ENCODE measurements at regions of chr12 and their contacts with region 1.

Region 1: DNA sequence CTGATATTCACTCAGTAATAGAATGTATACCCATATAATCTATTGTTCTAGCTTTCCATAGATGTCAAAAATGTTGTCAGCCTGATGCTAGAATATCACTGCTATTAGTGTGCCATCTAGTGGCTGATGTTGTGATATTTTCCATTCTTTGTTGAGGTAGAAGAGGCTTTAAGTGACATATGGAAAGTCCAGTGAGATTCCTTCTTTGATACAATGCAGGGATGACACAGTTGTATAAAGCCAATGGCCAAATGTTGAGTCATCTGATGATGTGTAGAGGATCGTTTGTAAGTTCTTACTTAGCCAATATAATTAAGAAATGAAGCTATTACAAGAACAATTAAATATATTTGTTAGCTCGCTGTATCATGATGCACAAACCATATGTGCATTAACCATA is 58.1 kb upstream of the PCED1B start:
- DNase-seq: peak; percentile 46
- ATAC-seq: peak; percentile 54; the same call in 2 of the 3 replicates
- H3K4me3 ChIP-seq: no peak overlapping the region
- H3K27ac ChIP-seq: no peak overlapping the region
- H3K4me1 ChIP-seq: no peaks in the 10 kb centered on the region
- H3K27me3 ChIP-seq: peaks cover 1 to 7% of the 10 kb centered on the region in 2 experiments; a peak in 3 of 5 replicates
- CTCF ChIP-seq: peak; percentile 81
- EP300 ChIP-seq: no peak
- POLR2A ChIP-seq: no peak
- RAD21 ChIP-seq: peak; percentile 47; the same call in 1 of the 2 replicates

Region 2: GRCh38 chr12:45622210-45622937 is 1398.9 kb before region 1 on chr12:
- CTCF ChIA-PET with region 1: no interaction called
- POLR2A ChIA-PET with region 1: no interaction called
- in situ Hi-C with region 1: no loop called
- intact Hi-C with region 1: no loop called
- DNase-seq: no peak
- ATAC-seq: no peak; the same call in 1 of the 3 replicates
- H3K4me3 ChIP-seq: no peak overlapping the region
- H3K27ac ChIP-seq: no peak overlapping the region
- H3K4me1 ChIP-seq: no peaks in the 10 kb centered on the region
- H3K27me3 ChIP-seq: no peaks in the 10 kb centered on the region
- CTCF ChIP-seq: no peak
- EP300 ChIP-seq: no peak
- POLR2A ChIP-seq: no peak
- RAD21 ChIP-seq: no peak

Region 3: GRCh38 chr12:46124848-46125619 is 896.3 kb before region 1 on chr12:
- CTCF ChIA-PET with region 1: no interaction called
- POLR2A ChIA-PET with region 1: no interaction called
- in situ Hi-C with region 1: no loop called
- intact Hi-C with region 1: loop called (anchors 1 kb)
- DNase-seq: peak; percentile 59
- ATAC-seq: peak; percentile 82
- H3K4me3 ChIP-seq: no peak overlapping the region; a peak in 1 of 6 replicates
- H3K27ac ChIP-seq: no peak overlapping the region
- H3K4me1 ChIP-seq: peaks cover 15% of the 10 kb centered on the region
- H3K27me3 ChIP-seq: peaks cover 0 to 10% of the 10 kb centered on the region in 2 experiments; a peak in 1 of 5 replicates
- CTCF ChIP-seq: peak; percentile 70
- EP300 ChIP-seq: no peak
- POLR2A ChIP-seq: no peak
- RAD21 ChIP-seq: peak; percentile 19; the same call in 1 of the 2 replicates

Region 4: DNA sequence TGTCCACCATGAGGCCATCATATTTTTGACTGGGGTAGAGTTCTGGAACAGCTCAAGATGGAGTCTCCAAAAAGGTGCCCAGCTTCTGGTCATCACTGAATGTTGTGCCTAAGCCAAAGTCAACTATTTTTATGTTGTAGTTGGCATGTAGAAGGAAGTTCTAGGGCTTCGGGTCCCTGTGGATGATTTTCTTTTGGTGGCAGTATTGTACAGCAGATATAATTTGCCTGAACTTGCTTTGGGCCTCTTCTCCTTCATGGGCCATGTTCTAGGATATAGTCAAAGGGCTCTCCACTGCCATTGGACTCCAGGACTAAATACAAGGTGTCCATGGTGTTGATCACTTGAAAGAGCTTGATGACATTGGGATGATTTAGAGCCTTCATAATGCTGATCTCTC is 339.1 kb before region 1 on chr12:
- CTCF ChIA-PET with region 1: no interaction called
- POLR2A ChIA-PET with region 1: no interaction called
- in situ Hi-C with region 1: no loop called
- intact Hi-C with region 1: loop called (anchors 1 kb)
- DNase-seq: no peak
- ATAC-seq: no peak
- H3K4me3 ChIP-seq: no peak overlapping the region
- H3K27ac ChIP-seq: no peak overlapping the region
- H3K4me1 ChIP-seq: peaks cover 11% of the 10 kb centered on the region
- H3K27me3 ChIP-seq: no peaks in the 10 kb centered on the region
- CTCF ChIP-seq: peak; percentile 26; the same call in 1 of the 2 replicates
- EP300 ChIP-seq: no peak
- POLR2A ChIP-seq: no peak
- RAD21 ChIP-seq: no peak